Right cardiac atrium (tissue), 5 donors: ENCODE measurements at regions of chr11 and their contacts with region 1.

Region 1: GRCh38 chr11:34051349-34052035 is at the start of gene CAPRIN1:
- DNase-seq: peak; percentile 90 to 96 (median 95)
- ATAC-seq: peak; percentile 94 to 96
- H3K4me3 ChIP-seq: peak within 1 kb of the TSS; percentile 93
- H3K27ac ChIP-seq: peak within 1 kb of the TSS; percentile 99
- H3K4me1 ChIP-seq: no peaks in the 10 kb centered on the region
- H3K27me3 ChIP-seq: no peaks in the 10 kb centered on the region
- total RNA-seq, gene CAPRIN1: 111 to 123 (median 116) TPM

Region 2: GRCh38 chr11:34105079-34105956 is 53.8 kb after region 1 on chr11 and contains the start of gene NAT10:
- intact Hi-C with region 1: loop called in 2 of 4 experiments (anchors 2 to 10 kb)
- DNase-seq: peak; percentile 97 to 98 (median 97)
- ATAC-seq: peak; percentile 98
- H3K4me3 ChIP-seq: peak within 1 kb of the TSS; percentile 50
- H3K27ac ChIP-seq: peak within 1 kb of the TSS; percentile 86
- H3K4me1 ChIP-seq: no peaks in the 10 kb centered on the region
- H3K27me3 ChIP-seq: no peaks in the 10 kb centered on the region
- total RNA-seq, gene NAT10: 21.2 to 24.7 (median 21.8) TPM